ENCODE measurements at regions of chr19 and their contacts with region 1.

Region 1: DNA sequence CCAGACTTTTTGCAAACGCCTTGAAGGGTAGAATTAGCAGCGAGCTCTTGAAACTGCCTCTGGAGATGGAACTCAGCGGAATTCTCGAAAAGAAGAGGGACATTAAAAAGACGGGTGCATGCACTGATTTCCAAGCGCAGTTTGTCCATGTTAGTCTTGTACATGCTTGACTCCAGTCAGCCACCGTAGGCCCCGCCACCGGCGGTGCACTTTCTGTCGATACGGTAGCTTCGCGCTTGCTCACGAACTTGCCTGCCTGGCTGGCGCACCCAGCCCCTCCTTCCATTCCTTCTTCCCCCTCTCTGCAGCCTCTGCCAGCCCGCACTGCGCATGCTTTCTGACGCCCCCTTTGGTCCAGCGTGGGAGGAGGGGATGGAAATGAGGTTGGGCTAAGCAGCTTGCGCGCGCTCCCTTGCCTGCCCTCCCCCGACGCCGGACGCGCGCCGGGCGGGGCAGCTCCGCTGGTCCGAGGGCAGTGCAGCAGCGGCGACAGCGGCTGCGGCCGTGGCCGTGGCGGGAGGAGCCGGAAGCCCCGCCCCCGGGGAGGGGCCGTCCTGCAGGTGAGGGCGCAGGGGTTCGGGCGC is at the start of gene ZNF575:
- DNase-seq: peak; percentile 93
- ATAC-seq: peak; percentile 54
- H3K4me3 ChIP-seq: peak within 1 kb of the TSS; percentile 71 to 94 (median 76)
- H3K4me3 Mint-ChIP-seq: peak within 1 kb of the TSS; percentile 91
- H3K27ac ChIP-seq: peak within 1 kb of the TSS; percentile 25 to 67
- H3K27ac Mint-ChIP-seq: peak within 1 kb of the TSS; percentile 96
- H3K4me1 ChIP-seq: peaks cover 5 to 28% of the 10 kb centered on the region in 2 donors
- H3K4me1 Mint-ChIP-seq: peaks cover 26% of the 10 kb centered on the region
- H3K27me3 ChIP-seq: no peaks in the 10 kb centered on the region
- H3K27me3 Mint-ChIP-seq: no peaks in the 10 kb centered on the region
- CTCF ChIP-seq: no peak
- total RNA-seq, gene ZNF575: 4.0 and 5.2 TPM in 2 replicates

Region 2: DNA sequence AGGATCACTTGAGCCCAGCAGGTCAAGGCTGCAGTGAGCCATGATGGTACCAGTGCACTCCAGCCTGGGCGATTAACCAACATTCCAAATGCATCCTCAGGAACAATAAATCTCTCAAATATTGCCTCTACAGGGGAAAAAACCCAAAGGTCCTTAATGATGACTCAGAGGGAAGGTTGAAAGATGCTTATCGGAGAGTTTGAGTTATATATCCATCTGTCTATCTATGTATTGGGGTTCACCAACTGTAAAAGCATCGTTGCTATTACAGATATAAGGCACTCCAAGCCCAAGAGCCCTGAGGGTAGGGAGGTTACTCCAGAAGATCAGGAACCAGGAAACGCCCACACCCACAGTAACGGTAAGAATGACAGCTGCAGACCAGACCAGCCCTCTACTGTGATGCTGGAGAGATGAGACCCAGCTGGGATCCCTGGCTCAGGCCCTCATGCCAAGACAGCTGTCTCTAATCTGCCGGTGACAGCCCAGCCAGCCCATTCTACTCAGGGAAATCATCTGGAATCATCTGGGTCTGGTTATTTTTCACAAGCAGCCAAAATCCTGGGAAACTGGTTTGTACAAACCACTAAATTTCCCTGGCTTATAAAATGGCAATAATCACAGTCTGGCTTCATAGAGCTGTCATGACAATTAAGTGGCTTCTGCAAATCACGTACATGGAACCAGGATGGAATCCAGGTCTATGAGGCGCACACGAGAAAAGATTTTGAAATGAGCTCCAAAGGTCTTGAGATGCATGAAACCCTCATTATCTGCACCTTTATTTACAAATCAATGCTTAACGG is 94.6 kb before region 1 on chr19:
- CTCF ChIA-PET with region 1: interaction called, 644 read pairs
- POLR2A ChIA-PET with region 1: interaction called, 11 read pairs
- intact Hi-C with region 1: no loop called
- DNase-seq: no peak
- ATAC-seq: no peak
- H3K4me3 ChIP-seq: peak overlapping the region in 1 of 5 experiments; percentile 34
- H3K4me3 Mint-ChIP-seq: peak overlapping the region; percentile 57
- H3K27ac ChIP-seq: peak overlapping the region; percentile 6 to 77
- H3K27ac Mint-ChIP-seq: peak overlapping the region; percentile 83
- H3K4me1 ChIP-seq: peaks cover 22 to 28% of the 10 kb centered on the region in 2 donors
- H3K4me1 Mint-ChIP-seq: peaks cover 29% of the 10 kb centered on the region
- H3K27me3 ChIP-seq: no peaks in the 10 kb centered on the region
- H3K27me3 Mint-ChIP-seq: no peaks in the 10 kb centered on the region
- CTCF ChIP-seq: no peak

Region 3: DNA sequence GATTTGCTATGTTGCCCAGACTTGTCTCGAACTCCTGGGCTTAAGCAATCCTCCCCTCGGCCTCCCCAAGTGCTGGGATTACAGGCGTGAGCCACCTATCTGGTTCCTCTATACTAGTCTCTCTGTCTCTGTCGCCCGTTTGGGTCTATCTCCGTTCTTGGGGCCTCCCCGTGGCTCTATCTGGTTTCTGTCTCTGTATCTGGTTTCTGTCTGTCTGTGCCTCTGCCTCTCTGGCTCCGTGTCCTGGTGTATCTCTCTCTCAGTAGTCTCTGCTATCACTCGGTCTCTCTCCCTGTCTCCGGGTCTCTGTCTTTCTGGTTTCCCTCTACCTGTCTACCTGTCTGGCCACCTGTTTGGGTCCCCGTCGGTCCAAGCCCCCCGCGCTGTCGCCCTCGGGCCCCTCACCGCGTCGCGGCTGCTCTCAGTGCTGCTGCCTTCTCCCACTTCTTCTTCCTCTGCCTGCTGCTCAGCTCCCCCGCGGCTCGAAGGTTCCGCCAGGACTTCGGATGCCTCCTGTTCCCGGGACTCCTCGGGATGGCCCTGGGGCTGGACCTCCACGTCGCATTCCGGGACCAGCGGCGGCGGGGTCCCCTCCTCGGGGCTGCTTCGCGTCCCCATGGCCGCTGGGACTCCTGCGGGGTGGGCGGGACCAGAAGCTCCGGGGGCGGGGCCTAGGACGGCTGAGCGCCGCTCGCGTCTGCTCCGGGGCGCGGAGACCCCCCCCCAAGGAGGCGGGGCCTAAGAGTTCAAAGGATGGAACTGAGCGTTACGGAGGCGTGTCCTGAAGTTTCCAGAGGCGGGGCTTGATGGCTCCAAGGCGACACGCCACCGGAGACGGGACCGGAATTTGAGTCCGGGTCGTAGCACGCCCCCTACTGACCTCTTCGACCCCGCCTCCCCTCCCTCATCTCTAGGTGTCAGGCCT is 29.3 kb before region 1 on chr19:
- CTCF ChIA-PET with region 1: interaction called, 4 read pairs
- POLR2A ChIA-PET with region 1: interaction called, 12 read pairs
- intact Hi-C with region 1: loop called (anchors 1 kb)
- DNase-seq: peak; percentile 97
- ATAC-seq: peak; percentile 95
- H3K4me3 ChIP-seq: peak overlapping the region; percentile 65 to 97 (median 76)
- H3K4me3 Mint-ChIP-seq: peak overlapping the region; percentile 95
- H3K27ac ChIP-seq: peak overlapping the region; percentile 80 to 82
- H3K27ac Mint-ChIP-seq: peak overlapping the region; percentile 98
- H3K4me1 ChIP-seq: peaks cover 12 to 22% of the 10 kb centered on the region in 2 donors
- H3K4me1 Mint-ChIP-seq: peaks cover 23% of the 10 kb centered on the region
- H3K27me3 ChIP-seq: no peaks in the 10 kb centered on the region
- H3K27me3 Mint-ChIP-seq: no peaks in the 10 kb centered on the region
- CTCF ChIP-seq: no peak

Region 4: DNA sequence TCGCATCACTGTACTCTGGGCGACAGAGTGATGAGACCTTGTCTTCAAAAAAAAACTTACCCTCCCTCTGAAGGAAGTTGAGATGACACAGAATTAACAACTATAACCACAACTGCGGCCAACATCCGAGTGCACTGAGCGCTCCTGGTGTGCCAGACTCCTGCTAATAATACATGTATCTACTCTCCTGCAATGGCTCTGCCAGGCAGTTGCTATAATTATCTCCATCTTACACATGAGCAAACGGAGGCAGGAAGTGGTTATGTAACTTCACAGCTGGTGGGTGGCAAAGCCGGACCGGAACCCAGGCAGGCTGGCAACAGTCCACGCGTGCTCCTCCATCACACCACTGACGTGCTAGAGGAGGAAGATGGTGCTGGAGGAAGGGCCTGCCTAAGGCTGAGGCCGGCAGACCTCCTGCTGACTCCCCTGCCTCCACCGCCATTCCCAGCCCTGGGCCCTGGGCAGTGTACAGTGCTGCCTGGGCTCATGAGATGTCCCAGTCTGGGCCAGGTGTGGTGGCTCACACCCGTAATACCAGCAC is 29.7 kb after region 1 on chr19:
- CTCF ChIA-PET with region 1: interaction called, 5 read pairs
- POLR2A ChIA-PET with region 1: interaction called, 5 read pairs
- intact Hi-C with region 1: loop called (anchors 2 kb)
- DNase-seq: peak; percentile 93
- ATAC-seq: peak; percentile 85
- H3K4me3 ChIP-seq: peak overlapping the region in 3 of 5 experiments; percentile 7 to 45 (median 11)
- H3K4me3 Mint-ChIP-seq: peak overlapping the region; percentile 68
- H3K27ac ChIP-seq: peak overlapping the region; percentile 92
- H3K27ac Mint-ChIP-seq: peak overlapping the region; percentile 99
- H3K4me1 ChIP-seq: peaks cover 42 to 52% of the 10 kb centered on the region in 2 donors
- H3K4me1 Mint-ChIP-seq: peaks cover 56% of the 10 kb centered on the region
- H3K27me3 ChIP-seq: no peaks in the 10 kb centered on the region
- H3K27me3 Mint-ChIP-seq: no peaks in the 10 kb centered on the region
- CTCF ChIP-seq: no peak

Region 5: DNA sequence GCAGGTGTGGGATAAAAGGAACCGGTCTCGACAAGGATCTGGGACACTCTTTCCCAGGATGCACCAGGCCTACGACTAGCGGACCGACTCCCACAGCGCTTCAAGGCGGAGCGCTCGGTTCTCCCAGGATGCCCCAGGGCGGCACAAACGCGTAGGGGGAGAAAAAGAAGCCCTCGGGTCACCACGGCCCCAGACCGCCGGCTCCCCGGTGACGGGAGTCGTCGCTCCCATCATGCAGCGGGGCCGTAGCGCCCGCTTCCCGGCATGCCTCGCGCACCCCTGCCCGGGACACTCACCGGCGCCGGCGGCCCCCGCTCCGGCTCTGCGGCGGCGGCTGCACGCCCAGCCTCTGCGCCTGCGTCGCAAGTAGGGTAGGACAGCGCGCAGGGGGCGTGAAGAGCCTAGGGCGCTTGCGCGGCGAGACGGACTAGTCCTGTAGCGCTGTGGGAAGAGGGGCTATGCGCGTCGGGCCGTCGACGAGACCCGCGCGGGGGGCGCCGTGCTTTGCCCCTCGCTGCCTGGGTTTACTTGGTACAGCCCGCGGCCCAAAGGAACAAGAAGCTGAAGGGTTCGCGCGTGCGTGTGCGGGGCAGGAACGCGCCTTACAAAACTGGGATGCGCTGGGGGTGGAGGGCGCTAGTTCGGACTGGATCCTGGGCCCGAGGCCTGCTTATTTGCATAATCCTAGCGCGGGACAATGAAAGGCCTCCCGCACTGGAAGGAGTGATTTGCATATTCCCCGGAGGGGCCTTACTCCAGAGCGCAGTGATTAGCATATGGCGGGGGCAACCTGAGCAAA is 86.4 kb after region 1 on chr19 and contains the start of gene ZNF428:
- CTCF ChIA-PET with region 1: no interaction called
- POLR2A ChIA-PET with region 1: interaction called, 3 read pairs
- intact Hi-C with region 1: loop called (anchors 1 kb)
- DNase-seq: peak; percentile 92
- ATAC-seq: peak; percentile 86
- H3K4me3 ChIP-seq: peak within 1 kb of the TSS; percentile 54 to 86 (median 80)
- H3K4me3 Mint-ChIP-seq: peak within 1 kb of the TSS; percentile 98
- H3K27ac ChIP-seq: peak within 1 kb of the TSS; percentile 84 to 88
- H3K27ac Mint-ChIP-seq: peak within 1 kb of the TSS; percentile 99
- H3K4me1 ChIP-seq: peaks cover 14 to 15% of the 10 kb centered on the region in 2 donors
- H3K4me1 Mint-ChIP-seq: peaks cover 27% of the 10 kb centered on the region
- H3K27me3 ChIP-seq: no peaks in the 10 kb centered on the region
- H3K27me3 Mint-ChIP-seq: no peaks in the 10 kb centered on the region
- CTCF ChIP-seq: no peak
- total RNA-seq, gene ZNF428: 19.7 and 24.6 TPM in 2 replicates

Region 6: DNA sequence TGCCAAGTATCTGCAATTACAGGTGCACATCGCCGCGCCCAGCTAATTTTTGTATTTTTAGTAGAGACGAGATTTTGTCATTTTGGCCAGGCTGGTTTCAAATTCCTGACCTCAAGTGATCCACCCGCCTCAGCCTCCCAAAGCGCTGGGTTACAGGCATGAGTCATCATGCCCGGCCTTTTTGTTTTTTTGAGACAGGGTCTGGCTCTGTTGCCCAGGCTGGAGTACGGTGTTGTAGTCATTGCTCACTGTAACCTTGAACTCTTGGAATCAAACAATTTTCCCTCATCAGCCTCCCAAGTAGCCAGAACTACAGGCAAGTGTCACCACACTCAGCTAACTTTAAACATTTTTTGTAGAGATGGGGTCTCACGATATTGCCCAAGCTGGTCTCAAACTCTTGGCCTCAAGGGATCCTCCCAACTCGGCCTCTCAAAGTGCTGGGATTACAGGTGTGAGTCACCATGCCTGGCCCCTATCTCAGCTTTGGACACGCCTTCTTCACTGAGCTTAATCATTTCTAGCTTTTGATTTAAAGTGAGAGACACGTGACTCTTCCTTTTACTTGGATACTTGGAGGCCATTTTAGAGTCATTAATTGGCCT is 178.8 kb after region 1 on chr19:
- CTCF ChIA-PET with region 1: no interaction called
- POLR2A ChIA-PET with region 1: no interaction called
- intact Hi-C with region 1: no loop called
- DNase-seq: no peak
- ATAC-seq: no peak
- H3K4me3 ChIP-seq: no peak overlapping the region
- H3K4me3 Mint-ChIP-seq: no peak overlapping the region
- H3K27ac ChIP-seq: no peak overlapping the region
- H3K27ac Mint-ChIP-seq: no peak overlapping the region
- H3K4me1 ChIP-seq: no peaks in the 10 kb centered on the region
- H3K4me1 Mint-ChIP-seq: no peaks in the 10 kb centered on the region
- H3K27me3 ChIP-seq: peaks cover 0 to 9% (median 3%) of the 10 kb centered on the region in 4 experiments
- H3K27me3 Mint-ChIP-seq: peaks cover 32% of the 10 kb centered on the region
- CTCF ChIP-seq: no peak

Region 7: GRCh38 chr19:43784981-43785808 is 252.1 kb after region 1 on chr19:
- CTCF ChIA-PET with region 1: interaction called, 3 read pairs
- POLR2A ChIA-PET with region 1: no interaction called
- intact Hi-C with region 1: loop called (anchors 1 kb)
- DNase-seq: peak; percentile 84
- ATAC-seq: peak; percentile 25
- H3K4me3 ChIP-seq: no peak overlapping the region
- H3K4me3 Mint-ChIP-seq: peak overlapping the region; percentile 68
- H3K27ac ChIP-seq: peak overlapping the region; percentile 73 to 85
- H3K27ac Mint-ChIP-seq: peak overlapping the region; percentile 99
- H3K4me1 ChIP-seq: peaks cover 38 to 51% of the 10 kb centered on the region in 2 donors
- H3K4me1 Mint-ChIP-seq: peaks cover 47% of the 10 kb centered on the region
- H3K27me3 ChIP-seq: no peaks in the 10 kb centered on the region
- H3K27me3 Mint-ChIP-seq: no peaks in the 10 kb centered on the region
- CTCF ChIP-seq: peak; percentile 99

Region 8: DNA sequence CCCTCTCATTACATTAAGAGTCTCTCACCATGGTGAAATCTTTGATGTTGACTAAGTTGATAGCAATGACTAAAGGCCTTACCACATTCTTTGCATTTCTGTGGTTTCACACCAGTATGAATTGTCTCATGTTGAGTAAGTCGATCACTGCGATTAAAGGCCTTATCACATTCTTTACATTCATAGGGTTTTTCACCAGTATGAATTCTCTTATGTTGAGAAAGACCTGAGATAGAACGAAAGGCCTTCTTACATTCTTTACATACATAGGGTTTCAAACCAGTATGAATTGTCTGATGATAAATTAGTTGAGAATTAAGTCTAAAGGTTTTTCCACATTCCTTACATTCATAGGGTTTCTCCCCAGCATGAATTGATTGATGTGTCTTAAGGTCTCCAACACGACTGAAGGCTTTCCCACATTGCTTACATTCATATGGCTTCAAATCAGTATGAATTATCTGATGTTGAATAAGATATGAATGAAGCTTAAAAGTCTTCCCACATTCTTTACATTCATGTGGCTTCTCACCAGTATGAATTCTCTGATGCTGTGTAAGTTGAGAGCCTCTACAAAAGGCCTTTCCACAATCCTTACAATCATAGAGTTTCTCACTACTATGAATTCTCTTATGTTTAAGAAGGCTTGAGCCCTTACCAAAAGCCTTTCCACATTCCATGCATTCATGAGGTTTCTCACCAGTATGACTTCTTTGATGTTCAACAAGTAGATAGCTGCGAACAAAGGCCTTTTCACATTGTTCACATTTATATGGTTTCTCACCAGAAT is 339.7 kb after region 1 on chr19:
- CTCF ChIA-PET with region 1: no interaction called
- POLR2A ChIA-PET with region 1: no interaction called
- intact Hi-C with region 1: no loop called
- DNase-seq: no peak
- ATAC-seq: no peak
- H3K4me3 ChIP-seq: no peak overlapping the region
- H3K4me3 Mint-ChIP-seq: no peak overlapping the region
- H3K27ac ChIP-seq: no peak overlapping the region
- H3K27ac Mint-ChIP-seq: no peak overlapping the region
- H3K4me1 ChIP-seq: no peaks in the 10 kb centered on the region
- H3K4me1 Mint-ChIP-seq: no peaks in the 10 kb centered on the region
- H3K27me3 ChIP-seq: no peaks in the 10 kb centered on the region
- H3K27me3 Mint-ChIP-seq: no peaks in the 10 kb centered on the region
- CTCF ChIP-seq: no peak

Measured in B cell (primary cell).